Naive thymus-derived CD8-positive, alpha-beta T cell (primary cell): ENCODE measurements at regions of chr5 and their contacts with region 1.

Region 1: DNA sequence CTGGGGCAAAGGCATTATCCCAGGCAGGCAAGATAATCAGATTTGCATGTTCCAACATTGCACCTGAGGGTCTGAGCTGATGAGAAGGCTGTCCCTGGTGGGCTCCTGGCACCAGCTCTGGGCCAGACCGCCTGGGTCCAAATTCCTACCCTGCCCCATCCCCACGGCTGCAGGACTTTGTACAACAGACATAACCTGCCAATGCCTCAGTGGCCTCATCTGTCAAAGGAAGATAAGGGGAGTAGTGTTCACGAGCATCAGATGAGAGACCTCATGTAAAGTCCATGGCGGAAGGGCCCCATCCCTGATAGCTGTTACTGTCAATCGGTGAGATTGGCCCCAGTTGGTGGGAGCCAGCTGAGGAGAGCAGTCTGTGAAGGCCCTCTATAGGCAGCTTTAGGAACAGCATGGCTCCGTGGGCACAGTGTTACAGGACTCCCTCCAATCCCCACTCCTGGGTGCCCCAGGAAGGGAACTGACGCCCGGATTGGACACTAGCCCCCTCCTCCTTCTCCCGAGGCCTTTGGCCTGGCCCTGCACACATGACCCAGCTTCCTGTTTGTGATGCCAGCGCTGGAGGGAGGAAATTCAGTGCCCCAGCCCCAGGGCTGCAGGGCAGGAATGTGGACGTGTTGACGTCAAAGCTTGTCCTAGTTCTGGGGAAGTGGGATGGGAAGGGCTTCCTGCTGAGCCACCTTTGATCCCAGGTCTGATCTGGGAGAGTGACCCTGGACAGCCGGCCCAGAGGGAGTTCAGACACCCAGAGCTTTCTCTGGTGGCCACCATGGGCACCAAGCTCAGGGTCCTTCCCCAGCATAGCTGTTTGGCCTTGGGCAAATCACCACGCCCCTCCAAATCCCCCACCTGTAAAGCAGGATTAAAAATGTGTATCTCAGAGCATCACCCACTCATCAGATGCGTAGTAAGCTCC is 56.2 kb downstream of the DUSP1 start:
- DNase-seq: peak; percentile 42 to 81 (median 59)
- ATAC-seq: peak; percentile 73 to 74
- H3K4me3 Mint-ChIP-seq: no peak overlapping the region
- H3K27ac Mint-ChIP-seq: peak overlapping the region in 6 of 10 donors; percentile 4 to 89 (median 64)
- H3K4me1 Mint-ChIP-seq: peaks cover 4 to 12% (median 7%) of the 10 kb centered on the region in 4 donors
- H3K27me3 Mint-ChIP-seq: peaks cover 7 to 16% (median 14%) of the 10 kb centered on the region in 5 donors

Region 2: DNA sequence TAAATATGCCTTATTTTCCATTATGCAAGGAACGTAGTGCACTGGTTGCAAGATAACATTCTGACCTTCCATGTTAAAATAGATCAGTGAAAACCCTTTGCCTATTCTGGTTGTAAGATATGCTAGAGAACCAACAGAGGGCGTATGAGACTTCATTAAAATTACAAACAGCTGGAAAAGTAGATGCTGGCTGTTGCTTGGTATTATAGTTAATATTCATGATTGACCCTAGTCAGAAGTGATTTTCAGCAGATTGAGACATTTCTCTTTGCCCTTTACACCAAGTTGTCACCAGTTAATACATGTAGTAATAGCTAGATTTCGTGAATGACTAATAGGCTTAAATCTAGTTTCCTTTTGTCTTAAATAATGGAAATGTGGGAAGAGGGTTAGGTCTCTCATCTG is 1309.2 kb before region 1 on chr5:
- POLR2A ChIA-PET with region 1: no interaction called
- DNase-seq: no peak
- ATAC-seq: no peak
- H3K4me3 Mint-ChIP-seq: no peak overlapping the region
- H3K27ac Mint-ChIP-seq: no peak overlapping the region
- H3K4me1 Mint-ChIP-seq: peaks cover 16 to 43% (median 40%) of the 10 kb centered on the region in 4 donors
- H3K27me3 Mint-ChIP-seq: no peaks in the 10 kb centered on the region

Region 3: GRCh38 chr5:172764849-172765765 is 50.4 kb after region 1 on chr5:
- POLR2A ChIA-PET with region 1: interaction called, 56 read pairs
- DNase-seq: peak; percentile 88 to 100 (median 98)
- ATAC-seq: peak; percentile 68 to 69
- H3K4me3 Mint-ChIP-seq: peak overlapping the region; percentile 77 to 89 (median 84)
- H3K27ac Mint-ChIP-seq: peak overlapping the region; percentile 94 to 100 (median 99)
- H3K4me1 Mint-ChIP-seq: peaks cover 24 to 66% (median 53%) of the 10 kb centered on the region in 4 donors
- H3K27me3 Mint-ChIP-seq: no peaks in the 10 kb centered on the region